AG04449 (cell line): ENCODE measurements at regions of chr10 and their contacts with region 1.

Region 1: DNA sequence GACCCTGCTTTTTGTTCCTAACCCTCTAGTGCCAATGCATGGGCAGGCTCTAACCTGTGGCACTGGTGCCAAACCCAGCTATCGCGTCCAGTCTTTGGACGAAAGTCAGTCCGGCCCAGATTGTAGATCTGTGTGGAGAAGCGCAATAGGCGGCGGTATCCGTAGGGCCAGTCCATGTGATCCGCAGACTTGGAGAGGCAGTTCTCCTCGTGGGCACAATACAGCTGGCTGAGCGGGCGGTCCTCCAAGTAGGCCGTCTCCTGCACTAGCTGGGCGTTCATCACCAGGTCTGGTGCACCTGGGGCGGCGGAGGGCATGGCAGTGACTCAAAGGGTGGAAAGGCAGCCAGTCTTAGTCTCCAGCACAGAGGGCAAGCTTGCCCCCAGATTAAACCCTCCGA is 14.5 kb downstream of the LOXL4 start:
- DNase-seq: no peak
- H3K4me3 ChIP-seq: no peak overlapping the region
- CTCF ChIP-seq: no peak

Region 2: DNA sequence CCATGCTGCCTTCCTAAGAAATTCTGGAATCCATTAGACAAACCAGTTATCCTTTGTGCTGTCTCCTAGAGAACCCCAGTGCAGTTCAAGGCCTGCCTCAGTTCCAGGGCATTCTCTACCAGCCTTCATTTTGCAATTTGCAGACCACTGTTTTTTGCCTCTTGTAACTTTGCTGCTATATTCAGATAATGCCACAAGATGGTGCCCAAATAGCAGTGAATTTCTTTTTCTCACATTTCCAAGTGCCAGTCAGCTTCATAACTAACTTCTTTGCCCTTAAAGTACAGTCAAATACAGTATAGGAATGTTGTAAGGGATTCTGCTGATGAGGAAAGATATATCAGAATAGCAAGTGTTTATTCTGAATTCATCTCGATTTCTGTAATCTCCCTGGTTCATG is 10.7 kb before region 1 on chr10:
- CTCF ChIA-PET with region 1: interaction called, 12 read pairs
- POLR2A ChIA-PET with region 1: no interaction called
- DNase-seq: no peak
- H3K4me3 ChIP-seq: no peak overlapping the region
- CTCF ChIP-seq: peak; percentile 50

Region 3: DNA sequence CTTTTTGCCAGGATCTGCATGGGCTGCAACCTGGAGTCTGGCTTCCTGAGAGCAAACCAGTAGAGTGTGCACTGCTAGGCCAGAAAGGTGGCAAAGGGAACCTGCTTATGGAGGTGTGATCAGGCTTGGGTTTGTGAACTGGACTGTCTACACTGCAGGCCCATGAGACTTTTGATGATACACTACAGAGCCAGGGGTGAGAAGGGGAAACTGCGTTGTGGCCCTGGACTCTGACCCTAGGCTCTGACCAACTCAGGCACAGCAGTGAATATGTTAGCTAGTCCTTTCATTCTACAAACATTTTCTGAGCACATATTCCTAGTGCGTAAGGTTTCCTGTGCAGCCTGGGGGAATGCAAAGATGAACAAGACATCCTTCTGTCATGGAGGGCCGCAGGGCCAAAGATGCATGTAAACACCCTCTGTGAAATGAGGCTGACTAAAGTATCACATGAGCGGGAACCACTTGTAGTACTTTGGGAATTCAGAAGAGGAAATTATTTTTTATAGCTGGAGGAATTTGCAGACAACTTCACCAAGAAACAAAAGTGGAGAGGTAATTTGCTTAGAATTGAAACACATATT is 257.0 kb after region 1 on chr10:
- CTCF ChIA-PET with region 1: no interaction called
- POLR2A ChIA-PET with region 1: no interaction called
- DNase-seq: no peak
- H3K4me3 ChIP-seq: no peak overlapping the region
- CTCF ChIP-seq: no peak